Posterior vena cava (tissue), 2 donors: ENCODE measurements at regions of chr9 and their contacts with region 1.

Region 1: GRCh38 chr9:96523374-96523773 is 73.4 kb downstream of the HABP4 start:
- DNase-seq: peak; percentile 94

Region 2: GRCh38 chr9:96139592-96140295 is 383.6 kb before region 1 on chr9:
- intact Hi-C with region 1: no loop called
- DNase-seq: no peak

Region 3: GRCh38 chr9:96512240-96512639 is 11.1 kb before region 1 on chr9:
- intact Hi-C with region 1: loop called in 1 of 2 experiments (anchors 1 kb)
- DNase-seq: no peak

Region 4: DNA sequence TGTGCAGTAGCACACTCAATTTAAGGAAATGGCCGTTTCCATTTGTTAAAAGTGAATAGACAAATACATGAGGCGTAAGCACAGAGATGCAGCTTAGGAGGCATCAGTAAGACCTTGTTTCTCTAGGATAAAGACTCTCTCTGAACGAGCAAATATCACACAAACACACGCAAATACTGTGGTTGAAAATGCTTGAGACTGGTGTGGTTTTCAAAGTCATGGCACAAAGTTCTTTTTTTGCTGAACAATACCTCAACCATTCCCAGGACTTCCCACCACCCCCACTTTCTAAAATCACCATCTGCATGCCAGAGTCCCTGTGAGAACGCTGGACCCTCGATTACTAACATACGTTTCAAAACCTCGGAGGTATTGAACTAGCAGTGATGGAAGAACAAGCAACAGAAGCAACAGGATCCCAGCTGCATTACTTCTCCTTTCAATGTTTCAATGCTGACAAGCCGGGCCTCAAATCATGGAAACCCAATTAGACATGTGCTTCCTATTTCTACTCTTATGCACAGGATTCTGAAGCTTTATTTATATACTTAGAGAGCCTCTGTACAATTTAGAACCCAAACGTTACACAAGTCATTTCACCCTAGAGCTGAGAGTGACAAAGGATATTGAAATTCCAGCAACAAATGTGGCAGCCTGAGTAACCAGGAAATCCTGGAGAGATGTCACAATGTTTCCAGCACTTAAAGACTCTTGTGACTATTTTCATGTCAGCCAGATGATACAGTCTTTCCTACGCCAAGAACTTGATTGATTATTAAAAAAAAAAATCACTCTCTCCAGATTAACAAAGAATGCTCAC is 32.4 kb after region 1 on chr9:
- intact Hi-C with region 1: loop called in 1 of 2 experiments (anchors 5 kb)
- DNase-seq: no peak

Region 5: GRCh38 chr9:96581786-96582185 is 58.4 kb after region 1 on chr9:
- intact Hi-C with region 1: no loop called
- DNase-seq: no peak

Region 6: GRCh38 chr9:97591535-97591934 is 1068.2 kb after region 1 on chr9:
- intact Hi-C with region 1: no loop called
- DNase-seq: no peak